ENCODE measurements at regions of chr7 and their contacts with region 1.

Region 1: GRCh38 chr7:2354186-2354938 is at the start of gene EIF3B:
- DNase-seq: peak; percentile 85 to 92
- H3K4me3 ChIP-seq: peak within 1 kb of the TSS; percentile 43 to 96 (median 79)
- H3K27ac ChIP-seq: peak within 1 kb of the TSS; percentile 99 to 100 (median 99)
- H3K4me1 ChIP-seq: peaks cover 16 to 30% of the 10 kb centered on the region in 2 donors
- H3K27me3 ChIP-seq: no peaks in the 10 kb centered on the region
- CTCF ChIP-seq: peak in 1 of 6 experiments; percentile 11
- POLR2A ChIP-seq: peak in 1 of 2 donors; percentile 63
- total RNA-seq, gene EIF3B: 89.4 to 122 (median 111) TPM

Region 2: DNA sequence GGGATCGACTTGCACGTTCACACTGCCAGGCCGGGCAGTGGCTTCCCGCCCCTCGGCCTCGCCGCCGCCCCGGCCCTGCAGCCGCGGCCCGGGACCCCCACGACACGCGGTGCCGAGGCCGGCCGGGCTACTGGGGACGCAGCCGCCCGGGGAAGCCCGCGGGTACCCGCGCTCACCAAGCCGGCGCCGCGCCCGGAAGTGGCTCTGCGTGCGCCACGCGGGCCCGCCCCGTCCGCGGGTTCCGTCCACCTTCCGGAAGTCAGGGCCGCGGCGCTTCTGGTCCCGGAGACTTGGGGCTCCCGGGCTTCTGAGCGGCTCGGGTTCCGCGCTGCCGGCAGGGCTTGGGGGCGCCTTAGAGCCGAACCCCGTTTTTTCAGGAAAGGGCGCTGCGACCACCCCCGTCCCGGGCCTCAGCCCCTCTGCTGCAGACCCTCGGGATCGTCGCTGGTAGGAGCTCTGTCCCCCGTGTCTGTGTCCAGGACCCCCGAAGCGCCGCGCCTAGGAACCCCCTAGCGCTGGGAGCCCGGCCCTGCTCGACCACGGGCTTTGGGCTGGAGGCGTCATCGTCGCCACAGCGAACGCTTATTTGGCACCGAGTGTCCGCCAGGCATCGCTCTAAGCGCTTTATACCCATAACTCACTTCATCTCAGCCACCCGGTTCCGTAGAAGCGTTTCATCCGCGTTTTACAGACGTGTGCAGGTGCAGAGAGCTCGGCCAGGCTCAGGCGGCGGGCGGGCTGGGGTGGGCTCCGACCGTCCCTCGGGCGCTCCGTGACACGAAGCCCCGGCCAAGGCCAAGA is 784.3 kb before region 1 on chr7 and contains the start of gene PSMG3:
- intact Hi-C with region 1: loop called (anchors 10 kb)
- DNase-seq: peak; percentile 91 to 94
- H3K4me3 ChIP-seq: peak within 1 kb of the TSS; percentile 57 to 89 (median 61)
- H3K27ac ChIP-seq: peak within 1 kb of the TSS; percentile 65 to 93 (median 73)
- H3K4me1 ChIP-seq: peaks cover 17 to 37% of the 10 kb centered on the region in 2 donors
- H3K27me3 ChIP-seq: no peaks in the 10 kb centered on the region
- CTCF ChIP-seq: peak in 5 of 6 experiments; percentile 10 to 34 (median 22)
- POLR2A ChIP-seq: peak; percentile 4 to 81
- total RNA-seq, gene PSMG3: 28.1 to 65.6 (median 50.2) TPM

Region 3: DNA sequence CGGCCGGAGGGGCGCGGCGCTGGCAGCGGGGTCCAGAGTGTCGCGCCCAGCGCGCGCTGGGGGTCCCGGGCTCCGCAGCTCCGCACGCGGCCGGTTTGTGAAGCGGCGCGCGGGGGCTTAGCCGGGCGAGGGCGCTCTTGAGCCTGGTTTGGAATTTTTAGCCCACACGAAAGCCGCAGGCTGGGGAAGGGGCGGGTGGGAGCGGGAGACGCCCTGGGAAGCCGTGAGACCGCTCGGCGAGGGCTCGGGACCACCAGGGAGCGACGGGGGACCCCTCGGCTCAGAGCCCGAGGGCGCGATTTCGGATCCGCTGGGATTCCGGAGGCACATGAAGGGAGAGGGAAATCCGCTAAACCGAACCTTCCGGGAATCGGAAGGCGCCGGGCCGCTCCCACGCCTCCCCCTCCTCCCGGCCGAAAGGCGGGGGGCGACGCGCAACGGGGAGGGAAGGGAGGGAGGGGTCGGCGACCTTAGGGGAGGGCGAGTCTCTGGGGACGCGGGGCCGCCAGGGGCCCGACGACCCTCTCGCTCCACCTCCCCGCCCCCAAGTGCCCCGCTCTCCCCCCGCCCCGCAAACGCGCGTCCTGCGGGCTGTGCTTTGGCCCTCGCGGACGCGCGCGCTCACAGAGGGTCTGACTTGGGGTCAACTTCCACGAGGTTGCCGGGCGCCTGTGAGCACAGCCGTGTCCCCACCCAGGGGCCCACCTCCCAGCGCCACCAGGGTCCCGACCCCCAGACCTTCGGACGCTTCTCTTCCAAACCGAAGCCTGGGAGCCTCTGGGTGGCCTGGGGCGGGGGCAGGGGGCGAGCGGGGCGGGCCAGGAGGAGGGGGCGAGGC is 689.4 kb before region 1 on chr7:
- intact Hi-C with region 1: loop called (anchors 10 kb)
- DNase-seq: peak; percentile 35 to 40
- H3K4me3 ChIP-seq: peak overlapping the region in 1 of 3 donors; percentile 29
- H3K27ac ChIP-seq: peak overlapping the region in 1 of 3 donors; percentile 23
- H3K4me1 ChIP-seq: peaks cover 24 to 45% of the 10 kb centered on the region in 2 donors
- H3K27me3 ChIP-seq: peaks cover 28% of the 10 kb centered on the region
- CTCF ChIP-seq: peak in 4 of 6 experiments; percentile 32 to 78 (median 38)
- POLR2A ChIP-seq: no peak

Region 4: DNA sequence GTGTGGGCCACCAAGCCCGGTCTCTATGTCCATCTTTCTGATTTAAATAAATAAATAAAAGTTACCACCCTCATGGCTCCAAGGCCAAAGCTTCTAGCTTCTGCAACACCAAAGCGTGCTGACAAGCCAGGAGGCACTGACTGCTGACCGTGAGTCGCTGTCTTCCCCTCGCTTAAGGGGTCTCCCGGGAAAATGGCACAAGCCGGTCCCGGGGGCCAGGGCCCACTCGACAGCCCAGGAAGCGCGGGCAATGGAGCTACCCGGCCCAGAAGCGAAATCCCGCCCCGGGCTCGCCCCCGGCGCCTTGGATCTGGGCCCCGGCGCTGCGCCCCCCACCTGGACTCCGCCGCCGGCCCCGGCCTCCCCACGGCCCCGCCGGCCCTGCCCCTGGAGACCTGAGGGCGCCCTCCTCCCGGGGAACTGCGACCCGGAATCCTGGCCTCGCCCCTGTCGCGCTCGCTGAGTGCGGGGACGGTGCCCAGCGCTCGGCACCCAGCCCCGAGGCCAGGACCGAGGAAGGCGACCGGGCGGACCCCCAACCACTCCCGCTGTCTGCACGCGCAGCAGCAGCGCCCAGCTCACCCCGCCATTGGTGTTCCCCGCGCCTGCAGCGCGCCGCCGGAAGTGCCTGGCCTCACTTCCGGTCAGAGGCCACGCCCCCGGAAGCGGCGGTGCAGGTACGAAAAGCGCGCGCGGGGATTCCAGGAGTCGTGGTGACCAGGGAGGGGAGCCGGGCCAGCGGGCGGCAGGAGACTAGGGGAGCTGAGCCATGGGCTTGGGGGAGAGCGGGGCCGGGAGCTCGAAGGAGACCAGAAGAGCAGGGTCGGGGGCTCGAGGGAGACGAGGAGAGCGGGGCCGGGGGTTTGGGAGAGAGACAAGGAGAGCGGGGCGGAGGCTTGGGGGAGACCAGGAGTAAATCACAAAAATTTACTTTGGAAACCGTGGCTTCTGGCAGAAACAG is 112.5 kb before region 1 on chr7 and contains the starts of genes MRM2 and NUDT1:
- intact Hi-C with region 1: loop called (anchors 10 kb)
- DNase-seq: peak; percentile 85 to 86
- H3K4me3 ChIP-seq: peak within 1 kb of the TSS; percentile 68 to 97 (median 82)
- H3K27ac ChIP-seq: peak within 1 kb of the TSS in 2 of 3 donors; percentile 43 to 53
- H3K4me1 ChIP-seq: peaks cover 9 to 17% of the 10 kb centered on the region in 2 donors
- H3K27me3 ChIP-seq: no peaks in the 10 kb centered on the region
- CTCF ChIP-seq: no peak
- POLR2A ChIP-seq: peak in 1 of 2 donors; percentile 75
- total RNA-seq, gene MRM2: 14.7 to 23.8 (median 18.2) TPM
- total RNA-seq, gene NUDT1: 7.0 to 11.9 (median 9.8) TPM

Region 5: GRCh38 chr7:2405601-2406345 is 51.4 kb after region 1 on chr7:
- intact Hi-C with region 1: loop called (anchors 5 kb)
- DNase-seq: no peak
- H3K4me3 ChIP-seq: no peak overlapping the region
- H3K27ac ChIP-seq: no peak overlapping the region
- H3K4me1 ChIP-seq: peaks cover 37 to 56% of the 10 kb centered on the region in 2 donors
- H3K27me3 ChIP-seq: no peaks in the 10 kb centered on the region
- CTCF ChIP-seq: no peak
- POLR2A ChIP-seq: no peak